Left ventricle myocardium superior (tissue), 1 donor: ENCODE measurements at regions of chr16 and their contacts with region 1.

Region 1: GRCh38 chr16:57167953-57168352 is 17.9 kb downstream of the PSME3IP1 start:
- DNase-seq: no peak
- ATAC-seq: peak; percentile 77

Region 2: GRCh38 chr16:57084257-57084770 is 83.6 kb before region 1 on chr16:
- intact Hi-C with region 1: loop called (anchors 5 kb)
- DNase-seq: peak; percentile 73
- ATAC-seq: peak; percentile 81